Activated naive CD4-positive, alpha-beta T cell treated with anti-CD3 and anti-CD28 coated beads for 36 hours (primary cell): ENCODE measurements at regions of chr6 and their contacts with region 1.

Region 1: DNA sequence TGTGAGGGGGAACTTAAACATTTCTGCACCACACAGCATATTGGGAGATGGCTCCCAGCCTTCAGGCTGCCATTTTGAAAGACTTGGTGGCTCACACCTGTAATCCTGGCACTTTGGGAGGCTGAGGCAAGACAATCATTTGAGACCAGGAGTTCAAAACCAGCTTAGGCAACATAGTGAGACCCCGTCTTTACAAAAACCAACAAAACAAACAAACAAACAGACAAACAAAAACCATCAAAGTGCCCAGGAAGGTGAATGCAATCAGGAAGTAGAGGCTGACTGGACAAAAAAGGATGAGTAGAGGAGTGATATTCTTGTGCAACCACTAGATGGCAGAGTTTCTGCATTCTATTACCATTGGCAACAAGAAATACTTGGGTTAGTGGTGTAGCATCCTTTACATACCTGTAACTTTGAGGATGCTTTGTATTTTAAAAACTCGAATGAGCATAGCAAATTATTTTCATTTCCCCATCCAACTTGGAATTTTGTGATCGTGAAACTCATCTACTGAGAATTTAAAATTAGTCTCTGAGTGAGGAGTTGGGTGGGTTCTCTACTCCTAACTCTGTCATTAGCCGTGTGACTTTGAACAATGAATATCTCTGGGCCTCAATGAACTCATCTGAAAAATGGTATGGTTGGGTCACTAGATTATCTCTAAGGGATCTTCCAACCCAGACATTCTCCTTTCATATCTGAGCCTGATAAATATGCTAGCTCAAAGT is 84.4 kb downstream of the CRYBG1 start:
- DNase-seq: peak; percentile 23
- H3K4me3 Mint-ChIP-seq: no peak overlapping the region
- H3K27ac Mint-ChIP-seq: no peak overlapping the region
- H3K4me1 Mint-ChIP-seq: peaks cover 16% of the 10 kb centered on the region
- H3K27me3 Mint-ChIP-seq: peaks cover 15% of the 10 kb centered on the region

Region 2: GRCh38 chr6:106339334-106340029 is 105.5 kb before region 1 on chr6:
- CTCF ChIA-PET with region 1: interaction called, 28 read pairs
- intact Hi-C with region 1: loop called (anchors 1 kb)
- DNase-seq: peak; percentile 68
- H3K4me3 Mint-ChIP-seq: no peak overlapping the region
- H3K27ac Mint-ChIP-seq: no peak overlapping the region
- H3K4me1 Mint-ChIP-seq: peaks cover 2% of the 10 kb centered on the region
- H3K27me3 Mint-ChIP-seq: peaks cover 6% of the 10 kb centered on the region

Region 3: GRCh38 chr6:106556368-106556960 is 111.5 kb after region 1 on chr6:
- CTCF ChIA-PET with region 1: interaction called, 361 read pairs
- intact Hi-C with region 1: loop called (anchors 1 kb)
- DNase-seq: no peak
- H3K4me3 Mint-ChIP-seq: no peak overlapping the region
- H3K27ac Mint-ChIP-seq: no peak overlapping the region
- H3K4me1 Mint-ChIP-seq: peaks cover 18% of the 10 kb centered on the region
- H3K27me3 Mint-ChIP-seq: no peaks in the 10 kb centered on the region

Region 4: DNA sequence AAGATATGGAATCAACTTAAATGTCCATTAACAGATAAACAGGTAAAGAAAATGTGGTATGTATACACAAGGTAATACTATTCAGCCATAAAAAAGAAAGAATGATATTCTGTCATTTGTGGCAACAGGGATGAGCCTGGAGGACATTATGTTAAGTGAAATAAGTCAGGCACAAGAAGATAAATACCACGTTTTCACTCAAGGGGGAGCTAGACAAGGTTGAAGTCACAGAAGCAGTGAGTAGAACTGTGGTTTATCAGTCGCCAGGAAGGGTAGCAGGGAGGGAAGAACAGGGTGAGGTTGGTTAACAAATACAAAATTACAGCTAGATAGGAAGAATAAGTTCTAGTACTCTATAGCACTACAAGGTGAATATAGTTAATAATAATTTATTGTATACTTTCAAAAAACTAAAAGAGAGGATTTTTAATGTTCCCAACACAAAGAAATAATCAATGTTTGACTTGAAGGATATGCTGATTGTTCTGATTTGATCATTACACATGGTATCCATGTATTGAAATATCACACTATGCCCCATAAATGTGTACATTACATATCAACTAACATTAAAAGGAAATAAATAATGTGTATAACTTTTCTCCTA is 163.2 kb after region 1 on chr6:
- CTCF ChIA-PET with region 1: interaction called, 5 read pairs
- intact Hi-C with region 1: loop called (anchors 1 kb)
- DNase-seq: peak; percentile 24
- H3K4me3 Mint-ChIP-seq: no peak overlapping the region
- H3K27ac Mint-ChIP-seq: no peak overlapping the region
- H3K4me1 Mint-ChIP-seq: peaks cover 8% of the 10 kb centered on the region
- H3K27me3 Mint-ChIP-seq: no peaks in the 10 kb centered on the region

Region 5: GRCh38 chr6:106997390-106998158 is 552.6 kb after region 1 on chr6:
- CTCF ChIA-PET with region 1: interaction called, 5 read pairs
- intact Hi-C with region 1: loop called (anchors 1 kb)
- DNase-seq: peak; percentile 75
- H3K4me3 Mint-ChIP-seq: no peak overlapping the region
- H3K27ac Mint-ChIP-seq: no peak overlapping the region
- H3K4me1 Mint-ChIP-seq: peaks cover 3% of the 10 kb centered on the region
- H3K27me3 Mint-ChIP-seq: no peaks in the 10 kb centered on the region